ENCODE measurements at regions of chr3 and their contacts with region 1.

Region 1: DNA sequence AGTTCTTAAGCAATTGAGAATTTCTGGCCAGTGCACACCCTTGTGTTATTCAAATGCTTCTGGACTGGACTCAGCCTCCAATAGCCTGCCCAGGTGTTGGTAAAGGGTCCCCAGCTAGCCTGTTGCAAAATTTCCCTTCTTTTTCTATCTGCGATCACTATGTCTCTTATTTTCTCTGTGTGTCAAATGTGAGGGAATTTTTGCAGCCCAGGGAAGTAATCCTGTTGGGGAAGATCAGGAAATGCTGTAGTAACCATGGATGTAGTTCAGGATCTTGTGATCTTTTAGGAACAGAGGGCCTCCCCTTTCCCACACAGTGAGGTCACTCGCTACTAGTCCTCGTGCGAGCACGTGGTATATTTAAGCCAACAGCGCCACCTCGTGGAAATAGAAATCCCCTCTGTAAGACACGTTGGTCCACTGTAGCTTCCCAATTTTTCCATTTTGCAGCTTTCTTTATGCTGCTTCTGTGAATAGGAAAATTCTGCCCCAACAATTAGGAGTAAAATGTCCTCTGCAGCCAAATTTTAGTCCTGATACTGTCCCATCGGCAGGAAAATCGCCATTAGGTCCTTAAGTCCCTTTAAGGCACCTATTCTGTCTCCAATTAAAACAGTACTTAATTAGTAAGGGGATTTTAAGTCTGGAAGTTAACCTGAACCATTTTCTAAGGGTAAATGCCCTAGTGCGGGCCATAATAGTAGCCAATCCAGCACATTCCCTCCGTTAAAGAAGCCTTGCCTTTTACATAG is 4.0 kb upstream of the SMCO1 start:
- DNase-seq: peak; percentile 59 to 74 (median 61)
- ATAC-seq: peak; percentile 72 to 74
- H3K4me3 ChIP-seq: no peak overlapping the region
- H3K27ac ChIP-seq: no peak overlapping the region
- H3K4me1 ChIP-seq: no peaks in the 10 kb centered on the region
- H3K27me3 ChIP-seq: no peaks in the 10 kb centered on the region

Region 2: GRCh38 chr3:196268270-196269163 is 250.6 kb before region 1 on chr3:
- intact Hi-C with region 1: loop called in 1 of 4 experiments (anchors 10 kb)
- DNase-seq: peak in 1 of 3 donors; percentile 53
- ATAC-seq: peak; percentile 39 to 76
- H3K4me3 ChIP-seq: no peak overlapping the region
- H3K27ac ChIP-seq: no peak overlapping the region
- H3K4me1 ChIP-seq: peaks cover 1% of the 10 kb centered on the region
- H3K27me3 ChIP-seq: no peaks in the 10 kb centered on the region

Measured in right cardiac atrium (tissue), 5 donors.